ENCODE measurements at regions of chr9 and their contacts with region 1.

Region 1: DNA sequence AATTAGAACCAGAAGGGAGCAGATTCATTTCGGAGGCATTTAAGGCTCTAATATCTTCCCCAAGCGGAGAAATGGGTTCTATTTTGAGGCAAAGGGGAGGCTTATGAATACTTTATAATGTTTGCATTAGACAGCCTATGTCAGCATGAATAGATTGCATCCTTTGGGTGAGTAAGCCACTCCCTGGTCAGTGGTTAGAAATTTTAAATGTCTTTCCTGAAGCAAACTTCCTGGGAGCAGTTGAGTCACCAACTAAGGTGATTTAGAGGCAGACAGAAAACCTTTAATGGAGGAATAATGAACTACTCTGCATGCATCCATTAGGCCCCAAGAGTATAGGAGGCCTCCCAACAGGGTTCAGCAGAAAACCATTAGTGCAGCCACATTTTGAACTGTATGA is 204.9 kb downstream of the ELAVL2 start:
- DNase-seq: peak; percentile 92
- ATAC-seq: peak; percentile 79
- H3K4me3 ChIP-seq: 0 out of 2 replicates have a peak overlapping the region, but pooled peaks have one; percentile 20
- H3K27ac ChIP-seq: peak overlapping the region; percentile 100
- H3K4me1 ChIP-seq: peaks cover 39% of the 10 kb centered on the region
- H3K27me3 ChIP-seq: no peaks in the 10 kb centered on the region
- CTCF ChIP-seq: no peak

Region 2: GRCh38 chr9:23342291-23342690 is 278.9 kb before region 1 on chr9:
- CTCF ChIA-PET with region 1: no interaction called
- POLR2A ChIA-PET with region 1: no interaction called
- intact Hi-C with region 1: loop called (anchors 10 kb)
- DNase-seq: peak; percentile 67
- ATAC-seq: peak; percentile 91
- H3K4me3 ChIP-seq: peak overlapping the region; percentile 30; the same call in 1 of the 2 replicates
- H3K27ac ChIP-seq: no peak overlapping the region
- H3K4me1 ChIP-seq: peaks cover 24% of the 10 kb centered on the region
- H3K27me3 ChIP-seq: no peaks in the 10 kb centered on the region
- CTCF ChIP-seq: no peak

Region 3: GRCh38 chr9:23581931-23582330 is 39.3 kb before region 1 on chr9:
- CTCF ChIA-PET with region 1: no interaction called
- POLR2A ChIA-PET with region 1: no interaction called
- intact Hi-C with region 1: loop called (anchors 1 kb)
- DNase-seq: peak; percentile 93
- ATAC-seq: peak; percentile 70
- H3K4me3 ChIP-seq: no peak overlapping the region
- H3K27ac ChIP-seq: peak overlapping the region; percentile 100
- H3K4me1 ChIP-seq: peaks cover 47% of the 10 kb centered on the region
- H3K27me3 ChIP-seq: no peaks in the 10 kb centered on the region
- CTCF ChIP-seq: no peak

Region 4: GRCh38 chr9:23638837-23639426 is 17.7 kb after region 1 on chr9:
- CTCF ChIA-PET with region 1: no interaction called
- POLR2A ChIA-PET with region 1: interaction called, 3 read pairs
- intact Hi-C with region 1: loop called (anchors 2 kb)
- DNase-seq: peak; percentile 76
- ATAC-seq: peak; percentile 77
- H3K4me3 ChIP-seq: no peak overlapping the region
- H3K27ac ChIP-seq: peak overlapping the region; percentile 84
- H3K4me1 ChIP-seq: peaks cover 36% of the 10 kb centered on the region
- H3K27me3 ChIP-seq: no peaks in the 10 kb centered on the region
- CTCF ChIP-seq: no peak

Region 5: DNA sequence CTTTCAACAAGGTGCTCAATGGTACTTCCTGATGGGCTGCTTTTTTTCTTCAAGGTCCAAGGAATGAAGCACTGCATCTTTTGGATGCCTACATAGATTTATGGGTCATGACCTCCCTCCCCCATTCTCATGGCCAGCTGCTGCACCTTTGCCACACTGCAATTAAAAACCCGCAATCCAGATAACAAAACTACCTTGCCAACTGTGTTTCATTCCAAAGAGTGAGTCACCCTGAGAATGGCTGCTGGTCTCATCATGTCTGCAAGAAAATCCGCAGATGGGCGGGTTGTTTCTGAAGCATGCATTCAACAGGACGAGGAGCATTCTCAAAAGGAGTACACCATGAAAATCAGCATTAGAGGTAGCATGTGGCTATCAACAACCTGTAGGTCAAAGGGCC is 65.1 kb after region 1 on chr9:
- CTCF ChIA-PET with region 1: no interaction called
- POLR2A ChIA-PET with region 1: no interaction called
- intact Hi-C with region 1: loop called (anchors 1 kb)
- DNase-seq: peak; percentile 92
- ATAC-seq: peak; percentile 69
- H3K4me3 ChIP-seq: no peak overlapping the region
- H3K27ac ChIP-seq: peak overlapping the region; percentile 92
- H3K4me1 ChIP-seq: peaks cover 50% of the 10 kb centered on the region
- H3K27me3 ChIP-seq: no peaks in the 10 kb centered on the region
- CTCF ChIP-seq: no peak

Region 6: DNA sequence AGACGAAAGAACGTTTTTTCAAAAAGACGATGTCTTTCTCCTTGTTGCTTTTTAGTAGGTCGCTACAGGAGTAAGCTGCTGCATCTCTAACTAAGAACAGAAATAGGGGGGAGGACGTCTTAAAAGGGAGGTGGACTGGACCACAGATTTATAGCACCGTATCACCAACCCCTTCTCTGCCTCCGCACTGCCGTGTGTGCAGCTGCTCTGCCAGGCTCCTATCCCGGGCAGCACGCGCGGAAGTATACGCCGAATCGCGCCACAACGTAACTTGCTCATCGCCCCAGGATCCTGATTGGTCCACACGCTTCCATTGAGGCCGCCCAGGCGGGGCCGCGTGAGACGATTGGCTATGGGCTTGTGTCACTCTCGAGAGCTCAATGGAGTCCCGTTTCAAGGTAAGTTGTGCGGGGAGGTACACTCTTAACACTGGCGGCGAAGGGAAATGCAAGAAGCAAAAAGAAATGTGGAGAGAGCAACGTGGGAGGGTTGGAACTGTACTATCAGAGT is 205.0 kb after region 1 on chr9 and contains the start of gene ELAVL2:
- CTCF ChIA-PET with region 1: no interaction called
- POLR2A ChIA-PET with region 1: no interaction called
- intact Hi-C with region 1: loop called (anchors 5 kb)
- DNase-seq: peak; percentile 98
- ATAC-seq: peak; percentile 84
- H3K4me3 ChIP-seq: peak within 1 kb of the TSS; percentile 79
- H3K27ac ChIP-seq: no peak within 1 kb of the TSS
- H3K4me1 ChIP-seq: peaks cover 14% of the 10 kb centered on the region
- H3K27me3 ChIP-seq: peaks cover 15% of the 10 kb centered on the region
- CTCF ChIP-seq: no peak
- total RNA-seq, gene ELAVL2: 10.9 and 16.3 TPM in 2 replicates